ENCODE measurements at regions of chr2 and their contacts with region 1.

Region 1: DNA sequence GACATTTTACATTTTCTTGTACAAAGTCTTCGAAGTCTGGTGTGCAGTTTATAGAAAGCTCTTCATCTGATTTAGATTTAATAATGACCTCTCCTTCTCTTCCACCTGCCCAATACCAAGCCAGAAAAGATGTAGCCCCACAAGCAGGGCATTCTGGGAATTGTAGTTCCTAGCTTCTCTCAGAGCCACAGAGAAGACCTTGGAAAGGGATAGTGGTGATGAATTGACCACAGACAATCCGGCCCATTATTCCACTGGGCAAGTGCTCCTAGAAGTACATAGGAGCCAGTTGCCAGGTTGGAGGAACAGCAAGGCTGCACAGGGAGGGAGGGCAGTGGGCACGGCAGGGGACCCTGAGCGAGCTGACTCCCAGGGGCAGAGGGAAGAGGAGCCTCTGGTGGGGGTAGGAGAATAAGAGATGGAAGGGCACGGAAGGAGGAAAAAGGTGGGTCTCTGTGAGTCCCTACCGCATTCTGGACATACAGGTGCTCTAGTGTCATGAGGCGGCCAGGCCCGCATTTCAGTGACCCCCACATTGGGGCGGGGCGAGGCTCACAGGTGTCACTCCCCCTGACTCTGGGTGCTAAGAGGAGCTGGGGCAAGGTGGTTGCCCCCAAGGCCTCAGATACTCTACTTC is 152.5 kb upstream of the HAAO start:
- DNase-seq: no peak
- ATAC-seq: no peak
- H3K4me3 ChIP-seq: no peak overlapping the region
- H3K4me3 Mint-ChIP-seq: no peak overlapping the region
- H3K27ac ChIP-seq: no peak overlapping the region
- H3K27ac Mint-ChIP-seq: no peak overlapping the region
- H3K4me1 ChIP-seq: no peaks in the 10 kb centered on the region
- H3K4me1 Mint-ChIP-seq: peaks cover 6% of the 10 kb centered on the region
- H3K27me3 ChIP-seq: no peaks in the 10 kb centered on the region
- H3K27me3 Mint-ChIP-seq: no peaks in the 10 kb centered on the region
- CTCF ChIP-seq: no peak

Region 2: DNA sequence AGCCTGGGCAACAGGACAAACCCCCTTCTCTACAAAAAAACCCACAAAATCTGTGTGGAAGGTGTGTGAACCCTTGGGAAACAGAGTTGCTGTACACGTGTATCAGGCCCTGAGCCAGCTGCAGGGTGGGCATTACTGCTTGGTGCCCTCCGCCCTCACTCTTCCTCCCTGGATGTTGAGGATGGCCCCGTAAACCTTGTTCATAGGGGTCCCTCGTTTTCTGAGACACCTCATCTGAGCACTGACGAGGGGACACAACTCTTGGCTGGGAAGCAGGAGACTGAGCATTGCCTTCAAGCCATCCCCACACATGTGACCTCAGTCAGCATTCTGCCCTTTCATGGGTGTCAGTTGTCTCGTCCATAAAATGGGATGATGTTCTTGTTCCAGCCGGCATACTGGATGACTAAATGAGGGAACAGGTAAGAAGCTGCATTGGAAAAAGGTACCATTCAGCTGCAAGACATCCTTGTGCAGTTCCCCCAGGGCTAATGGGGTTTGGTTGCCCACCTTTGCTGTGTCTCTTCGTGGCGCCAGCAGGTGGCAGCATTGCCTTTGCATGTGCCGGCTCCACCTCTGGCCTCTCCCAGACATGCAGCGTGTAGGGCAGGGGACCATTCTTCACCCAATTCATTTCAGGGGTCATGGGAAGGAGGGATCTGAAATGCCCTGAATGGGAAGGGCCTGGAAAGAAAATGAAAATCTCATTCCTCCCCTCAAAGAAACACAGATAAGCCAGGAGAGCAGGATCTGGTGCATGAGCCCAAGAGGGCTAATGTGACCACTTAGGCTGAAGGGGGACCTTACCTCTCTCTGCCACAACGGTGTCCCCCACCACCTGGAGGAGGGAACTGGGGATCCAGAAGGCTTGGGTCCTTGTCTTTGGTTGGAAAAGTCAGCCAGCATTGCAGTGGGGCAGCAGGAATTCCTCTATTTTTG is 116.1 kb before region 1 on chr2:
- CTCF ChIA-PET with region 1: no interaction called
- POLR2A ChIA-PET with region 1: no interaction called
- intact Hi-C with region 1: loop called (anchors 5 kb)
- DNase-seq: peak; percentile 51 to 86 (median 60)
- ATAC-seq: peak; percentile 93
- H3K4me3 ChIP-seq: no peak overlapping the region
- H3K4me3 Mint-ChIP-seq: no peak overlapping the region
- H3K27ac ChIP-seq: no peak overlapping the region
- H3K27ac Mint-ChIP-seq: no peak overlapping the region
- H3K4me1 ChIP-seq: peaks cover 19% of the 10 kb centered on the region
- H3K4me1 Mint-ChIP-seq: peaks cover 18% of the 10 kb centered on the region
- H3K27me3 ChIP-seq: no peaks in the 10 kb centered on the region
- H3K27me3 Mint-ChIP-seq: peaks cover 6% of the 10 kb centered on the region
- CTCF ChIP-seq: peak; percentile 83

Region 3: GRCh38 chr2:42859006-42859552 is 85.8 kb before region 1 on chr2:
- CTCF ChIA-PET with region 1: no interaction called
- POLR2A ChIA-PET with region 1: no interaction called
- intact Hi-C with region 1: loop called in 1 of 2 experiments (anchors 5 kb)
- DNase-seq: peak; percentile 17 to 77 (median 50)
- ATAC-seq: peak; percentile 62
- H3K4me3 ChIP-seq: no peak overlapping the region
- H3K4me3 Mint-ChIP-seq: no peak overlapping the region
- H3K27ac ChIP-seq: no peak overlapping the region
- H3K27ac Mint-ChIP-seq: no peak overlapping the region
- H3K4me1 ChIP-seq: no peaks in the 10 kb centered on the region
- H3K4me1 Mint-ChIP-seq: no peaks in the 10 kb centered on the region
- H3K27me3 ChIP-seq: no peaks in the 10 kb centered on the region
- H3K27me3 Mint-ChIP-seq: no peaks in the 10 kb centered on the region
- CTCF ChIP-seq: peak; percentile 88

Region 4: DNA sequence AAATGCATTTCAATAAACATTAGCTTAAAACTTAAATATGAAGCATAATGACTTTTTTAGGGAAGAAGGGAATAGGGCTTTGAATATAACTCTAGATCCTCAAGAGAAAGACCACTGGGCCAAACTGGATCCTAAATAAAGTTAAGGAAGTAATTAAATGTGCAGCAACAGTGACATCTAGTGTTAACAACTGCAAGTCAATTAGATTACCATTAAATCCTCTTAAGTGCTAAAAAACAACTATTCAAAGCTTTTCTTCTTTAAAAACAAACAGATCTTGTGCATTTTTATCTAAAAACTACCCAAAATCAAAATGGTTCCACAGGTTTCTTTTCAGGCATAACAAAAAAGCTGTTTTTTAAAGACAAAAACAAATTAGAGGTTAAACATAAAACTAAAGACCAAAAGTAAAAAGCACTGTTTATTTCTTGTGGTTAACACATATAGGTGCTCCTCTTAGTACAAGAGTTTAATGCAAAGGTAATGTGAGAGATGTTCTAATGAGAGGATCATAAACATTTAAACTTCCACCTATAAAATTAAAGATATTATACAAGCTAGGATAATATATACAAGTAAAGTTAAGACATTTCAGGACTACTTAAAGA is 539.5 kb after region 1 on chr2:
- CTCF ChIA-PET with region 1: interaction called, 9 read pairs
- POLR2A ChIA-PET with region 1: interaction called, 4 read pairs
- intact Hi-C with region 1: loop called (anchors 1 kb)
- DNase-seq: peak in 3 of 14 experiments; percentile 68 to 79 (median 76)
- ATAC-seq: no peak
- H3K4me3 ChIP-seq: no peak overlapping the region
- H3K4me3 Mint-ChIP-seq: no peak overlapping the region
- H3K27ac ChIP-seq: no peak overlapping the region
- H3K27ac Mint-ChIP-seq: no peak overlapping the region
- H3K4me1 ChIP-seq: no peaks in the 10 kb centered on the region
- H3K4me1 Mint-ChIP-seq: no peaks in the 10 kb centered on the region
- H3K27me3 ChIP-seq: no peaks in the 10 kb centered on the region
- H3K27me3 Mint-ChIP-seq: no peaks in the 10 kb centered on the region
- CTCF ChIP-seq: peak; percentile 75

Region 5: DNA sequence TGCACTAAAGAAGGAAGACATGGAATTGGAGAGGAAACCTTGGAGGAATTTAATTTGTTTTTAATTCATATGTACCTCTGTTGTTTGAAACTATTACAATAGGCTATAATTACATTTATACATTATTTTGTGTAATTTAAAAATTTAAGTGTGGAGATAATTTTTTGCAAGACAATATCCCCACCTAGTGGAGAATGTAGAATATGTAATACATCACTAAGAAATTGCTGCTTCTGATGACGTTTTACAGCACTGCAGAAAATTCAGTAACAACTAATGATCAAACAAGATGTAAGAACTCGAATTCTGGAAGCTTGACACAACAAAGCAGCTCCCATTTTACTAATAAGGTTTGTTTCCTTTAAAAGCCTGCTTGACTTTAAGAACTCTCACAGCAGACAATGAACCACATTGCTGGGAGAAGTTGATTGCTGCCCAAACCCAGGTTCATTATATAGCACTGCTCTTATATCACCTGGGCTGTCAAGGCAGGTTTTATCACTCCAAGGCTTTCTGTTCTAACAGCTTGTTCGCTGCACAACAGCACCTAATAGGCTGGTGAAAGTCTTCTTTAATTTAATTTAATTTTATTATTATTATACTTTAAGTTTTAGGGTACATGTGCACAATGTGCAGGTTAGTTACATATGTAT is 597.5 kb after region 1 on chr2:
- CTCF ChIA-PET with region 1: interaction called, 5 read pairs
- POLR2A ChIA-PET with region 1: no interaction called
- intact Hi-C with region 1: loop called (anchors 1 to 2 kb)
- DNase-seq: peak in 3 of 14 experiments; percentile 63 to 68 (median 65)
- ATAC-seq: peak; percentile 89
- H3K4me3 ChIP-seq: no peak overlapping the region
- H3K4me3 Mint-ChIP-seq: no peak overlapping the region
- H3K27ac ChIP-seq: no peak overlapping the region
- H3K27ac Mint-ChIP-seq: no peak overlapping the region
- H3K4me1 ChIP-seq: peaks cover 3% of the 10 kb centered on the region
- H3K4me1 Mint-ChIP-seq: peaks cover 16% of the 10 kb centered on the region
- H3K27me3 ChIP-seq: no peaks in the 10 kb centered on the region
- H3K27me3 Mint-ChIP-seq: no peaks in the 10 kb centered on the region
- CTCF ChIP-seq: peak; percentile 78

Region 6: DNA sequence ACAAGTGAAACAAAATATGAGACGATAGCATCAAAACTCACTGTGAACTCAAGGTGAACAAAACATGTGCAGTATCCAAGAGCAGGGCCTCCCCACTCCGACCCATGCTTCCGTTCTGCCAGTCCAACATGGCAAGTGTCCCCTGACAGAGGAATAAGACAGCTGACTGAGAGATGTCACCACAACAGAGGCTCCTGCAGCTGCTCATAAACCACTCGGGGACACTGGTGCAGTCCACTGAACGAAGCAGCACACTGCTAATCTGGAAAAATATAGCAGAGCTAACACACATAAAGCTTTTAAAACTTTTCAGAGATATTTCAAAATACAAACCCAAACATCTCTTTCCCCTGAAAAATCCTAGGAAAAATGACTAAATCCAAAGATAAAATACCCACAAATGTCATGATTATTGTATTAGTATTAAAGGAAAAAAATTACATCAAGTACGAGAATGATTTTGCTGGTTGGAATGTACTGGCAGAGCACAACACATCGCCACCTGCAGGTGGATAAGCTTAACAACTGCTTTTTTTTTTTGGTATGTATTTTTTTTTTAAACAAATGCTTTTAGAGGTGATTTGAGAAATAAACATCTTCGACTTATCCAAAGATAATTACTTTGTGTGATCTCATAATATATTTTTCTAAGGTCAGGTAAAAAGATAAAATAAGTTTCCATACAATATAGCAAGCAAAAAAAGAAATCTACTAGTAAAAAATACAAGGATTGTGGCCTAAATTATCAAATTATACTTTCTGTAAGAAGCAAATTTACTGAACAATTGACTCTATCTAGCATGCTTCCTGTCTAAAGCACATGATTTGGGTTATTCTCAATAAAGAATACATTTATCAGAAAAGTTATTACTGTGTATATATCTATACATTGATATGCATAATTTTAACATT is 632.3 kb after region 1 on chr2:
- CTCF ChIA-PET with region 1: interaction called, 6 read pairs
- POLR2A ChIA-PET with region 1: no interaction called
- intact Hi-C with region 1: loop called in 1 of 2 experiments (anchors 10 kb)
- DNase-seq: peak in 8 of 14 experiments; percentile 12 to 76 (median 34)
- ATAC-seq: no peak
- H3K4me3 ChIP-seq: no peak overlapping the region
- H3K4me3 Mint-ChIP-seq: no peak overlapping the region
- H3K27ac ChIP-seq: no peak overlapping the region
- H3K27ac Mint-ChIP-seq: no peak overlapping the region
- H3K4me1 ChIP-seq: peaks cover 4% of the 10 kb centered on the region
- H3K4me1 Mint-ChIP-seq: peaks cover 23% of the 10 kb centered on the region
- H3K27me3 ChIP-seq: no peaks in the 10 kb centered on the region
- H3K27me3 Mint-ChIP-seq: no peaks in the 10 kb centered on the region
- CTCF ChIP-seq: peak; percentile 92

Region 7: GRCh38 chr2:43611987-43612894 is 667.3 kb after region 1 on chr2:
- CTCF ChIA-PET with region 1: no interaction called
- POLR2A ChIA-PET with region 1: no interaction called
- intact Hi-C with region 1: loop called in 1 of 2 experiments (anchors 1 kb)
- DNase-seq: peak; percentile 52 to 85 (median 64)
- ATAC-seq: peak; percentile 96
- H3K4me3 ChIP-seq: no peak overlapping the region
- H3K4me3 Mint-ChIP-seq: no peak overlapping the region
- H3K27ac ChIP-seq: no peak overlapping the region
- H3K27ac Mint-ChIP-seq: no peak overlapping the region
- H3K4me1 ChIP-seq: no peaks in the 10 kb centered on the region
- H3K4me1 Mint-ChIP-seq: no peaks in the 10 kb centered on the region
- H3K27me3 ChIP-seq: no peaks in the 10 kb centered on the region
- H3K27me3 Mint-ChIP-seq: peaks cover 4% of the 10 kb centered on the region
- CTCF ChIP-seq: peak; percentile 80

Measured in CD4-positive, alpha-beta T cell (primary cell).